GM13977 (cell line): ENCODE measurements at regions of chr11 and their contacts with region 1.

Region 1: GRCh38 chr11:76577199-76577920 is 93.2 kb downstream of the LRRC32 start:
- DNase-seq: no peak
- CTCF ChIP-seq: no peak

Region 2: DNA sequence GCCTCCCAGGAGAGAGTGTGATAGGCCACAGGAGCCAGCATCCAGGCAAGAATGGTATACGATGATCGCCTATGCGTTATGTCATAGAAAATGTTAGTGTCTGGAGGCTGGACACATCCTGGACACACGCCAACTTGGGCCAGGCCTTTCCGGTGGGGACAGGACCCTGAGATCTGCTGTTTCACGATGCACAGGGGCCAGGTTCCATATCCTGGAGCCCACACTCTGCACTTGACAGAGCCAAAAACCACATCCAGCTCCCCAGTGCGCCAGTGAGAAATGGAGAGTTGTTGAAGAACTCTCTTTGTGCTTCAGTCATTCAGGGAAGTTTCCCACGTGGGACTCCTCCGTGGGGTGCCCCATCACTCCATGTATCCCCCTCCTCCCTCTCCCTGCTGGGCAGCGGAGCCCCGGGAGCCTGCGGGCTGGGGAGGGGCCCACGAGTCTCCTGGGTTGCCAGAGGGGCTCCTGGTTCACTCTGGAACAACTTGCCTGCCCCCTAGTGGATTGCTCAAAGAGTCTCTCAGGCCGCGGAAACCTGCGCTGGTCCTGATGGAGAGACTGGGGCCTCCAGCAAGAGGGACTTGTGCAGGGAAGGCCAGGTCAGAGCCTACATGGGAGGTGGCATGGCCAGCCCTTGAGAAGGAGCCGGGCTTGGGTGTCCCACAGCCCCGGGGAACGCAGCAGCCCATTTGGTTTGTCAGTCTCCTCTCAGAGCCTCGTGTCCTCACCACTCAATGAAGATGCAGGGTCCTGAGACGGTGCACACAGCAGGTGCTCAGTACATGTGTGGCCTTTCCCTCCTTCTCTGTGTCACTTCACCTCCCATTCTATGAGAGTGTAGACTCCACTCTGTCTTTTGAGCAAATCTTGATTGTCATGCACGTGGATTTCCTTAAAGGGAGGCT is 103.4 kb after region 1 on chr11:
- in situ Hi-C with region 1: loop called (anchors 10 kb)
- DNase-seq: peak; percentile 81
- CTCF ChIP-seq: peak; percentile 90